Psoas muscle (tissue), 8 donors: ENCODE measurements at regions of chr11 and their contacts with region 1.

Region 1: GRCh38 chr11:2885676-2886081 is at the start of gene CDKN1C:
- DNase-seq: peak; percentile 89 to 93
- ATAC-seq: peak; percentile 81 to 84 (median 82)
- H3K4me3 ChIP-seq: peak within 1 kb of the TSS; percentile 88
- H3K27ac ChIP-seq: peak within 1 kb of the TSS; percentile 81
- H3K4me1 ChIP-seq: peaks cover 16% of the 10 kb centered on the region
- H3K27me3 ChIP-seq: no peaks in the 10 kb centered on the region
- CTCF ChIP-seq: no peak
- total RNA-seq, gene CDKN1C: 14.3 to 37.7 (median 27.9) TPM

Region 2: DNA sequence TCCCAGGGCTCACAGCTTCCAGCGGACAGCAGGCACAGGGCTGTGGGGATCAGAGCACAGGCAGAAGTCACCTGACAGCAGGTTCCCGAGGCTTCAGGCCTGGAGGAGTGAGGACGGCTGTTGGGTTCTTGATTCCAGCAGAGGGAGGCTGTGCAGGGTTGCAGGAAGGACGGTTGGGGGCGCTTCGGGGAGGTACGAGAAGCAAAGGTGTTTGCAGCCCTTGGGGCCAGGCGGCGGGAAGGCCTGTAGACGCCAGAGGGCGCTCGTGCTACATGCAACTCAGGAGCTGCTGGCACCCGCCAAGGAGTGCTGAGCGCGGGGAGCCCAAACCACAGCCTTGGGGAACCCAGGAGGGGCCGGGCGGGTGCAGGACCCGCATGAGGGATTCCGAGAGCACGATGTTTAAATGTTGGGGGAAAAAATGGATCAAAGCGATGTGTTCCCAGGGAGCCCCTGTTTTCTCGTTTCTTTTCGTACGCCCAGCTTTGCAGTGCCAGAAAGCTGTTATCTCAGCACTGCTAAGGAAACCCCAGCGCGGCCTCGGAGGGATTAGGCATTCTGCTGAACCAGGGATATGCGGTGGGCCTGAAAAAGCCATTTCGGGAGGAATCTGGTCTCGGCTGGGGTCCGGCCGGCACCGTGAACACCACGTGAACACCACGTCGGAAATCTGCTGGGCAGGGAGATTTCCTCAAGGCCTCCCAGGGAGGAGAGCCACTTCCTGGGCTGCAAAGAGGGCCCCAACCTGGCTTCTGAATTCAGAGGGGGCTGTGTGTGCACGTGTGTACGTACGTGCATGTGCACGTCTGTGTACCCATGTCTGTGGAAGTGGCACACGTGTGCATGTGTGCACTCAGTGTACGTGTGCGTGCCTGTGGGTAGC is 352.7 kb before region 1 on chr11:
- intact Hi-C with region 1: loop called (anchors 1 kb)
- DNase-seq: peak; percentile 88 to 95
- ATAC-seq: peak; percentile 85 to 94 (median 89)
- H3K4me3 ChIP-seq: peak overlapping the region; percentile 53
- H3K27ac ChIP-seq: no peak overlapping the region
- H3K4me1 ChIP-seq: peaks cover 8% of the 10 kb centered on the region
- H3K27me3 ChIP-seq: peaks cover 0 to 2% (median 0%) of the 10 kb centered on the region in 3 donors
- CTCF ChIP-seq: peak; percentile 99

Region 3: DNA sequence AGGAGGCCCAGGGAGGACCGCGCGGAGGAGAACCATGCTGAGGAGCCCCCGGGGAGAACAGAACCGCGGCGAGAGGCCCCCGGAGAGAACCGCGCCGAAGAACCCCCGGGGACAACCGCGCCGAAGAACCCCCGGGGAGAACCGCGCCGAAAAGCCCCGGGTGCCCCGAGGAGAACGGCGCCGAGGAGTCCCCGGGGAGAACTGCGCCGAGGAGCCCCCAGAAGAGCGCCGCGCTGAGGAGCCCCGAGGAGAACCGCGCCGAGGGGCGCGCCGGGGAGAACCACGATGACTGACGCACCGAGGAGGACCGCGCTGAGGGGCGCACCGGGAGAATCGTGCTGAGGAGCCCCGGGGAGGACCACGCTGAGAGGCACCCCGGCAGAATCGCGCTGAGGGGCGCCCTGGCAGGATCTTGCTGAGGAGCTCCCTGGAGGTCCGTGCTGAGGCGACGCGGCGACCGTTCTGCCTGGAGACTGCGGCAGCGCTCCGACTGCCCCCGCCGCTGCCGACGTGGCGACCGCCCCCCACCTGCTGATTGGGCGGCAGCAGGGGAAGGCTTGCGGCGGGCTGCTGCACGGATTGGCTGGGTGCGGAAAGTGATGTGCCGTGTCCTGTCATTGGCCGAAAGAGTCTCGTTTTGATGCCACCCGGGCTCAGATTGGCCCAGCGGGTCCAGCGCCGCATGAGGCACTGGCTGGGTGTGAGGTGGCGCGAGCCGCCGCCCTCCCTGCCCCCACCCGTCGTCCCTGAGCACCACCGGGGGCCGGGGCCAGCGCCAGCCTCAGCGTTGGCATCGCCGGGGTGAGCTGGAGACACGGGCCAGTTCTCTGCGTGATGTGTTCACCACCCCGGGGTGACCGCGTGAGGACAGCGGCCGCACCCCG is 185.9 kb before region 1 on chr11 and contains the start of gene KCNQ1OT1:
- intact Hi-C with region 1: loop called in 1 of 2 experiments (anchors 10 kb)
- DNase-seq: peak; percentile 90 to 94
- ATAC-seq: peak; percentile 87 to 92 (median 89)
- H3K4me3 ChIP-seq: peak within 1 kb of the TSS; percentile 72
- H3K27ac ChIP-seq: peak within 1 kb of the TSS; percentile 94
- H3K4me1 ChIP-seq: peaks cover 17% of the 10 kb centered on the region
- H3K27me3 ChIP-seq: no peaks in the 10 kb centered on the region
- CTCF ChIP-seq: no peak
- total RNA-seq, gene KCNQ1OT1: 0.30 to 0.56 (median 0.42) TPM

Region 4: GRCh38 chr11:2706321-2706720 is 179.4 kb before region 1 on chr11:
- intact Hi-C with region 1: loop called in 1 of 2 experiments (anchors 1 kb)
- DNase-seq: peak in 1 of 2 donors; percentile 3
- ATAC-seq: no peak
- H3K4me3 ChIP-seq: no peak overlapping the region
- H3K27ac ChIP-seq: no peak overlapping the region
- H3K4me1 ChIP-seq: peaks cover 20% of the 10 kb centered on the region
- H3K27me3 ChIP-seq: no peaks in the 10 kb centered on the region
- CTCF ChIP-seq: no peak

Region 5: GRCh38 chr11:2778630-2779498 is 106.8 kb before region 1 on chr11:
- intact Hi-C with region 1: loop called in 1 of 2 experiments (anchors 5 kb)
- DNase-seq: peak; percentile 67 to 90
- ATAC-seq: peak; percentile 85 to 96 (median 94)
- H3K4me3 ChIP-seq: peak overlapping the region; percentile 30
- H3K27ac ChIP-seq: peak overlapping the region; percentile 43
- H3K4me1 ChIP-seq: peaks cover 21% of the 10 kb centered on the region
- H3K27me3 ChIP-seq: no peaks in the 10 kb centered on the region
- CTCF ChIP-seq: peak; percentile 21